ENCODE measurements at regions of chr1 and their contacts with region 1.

Region 1: GRCh38 chr1:42504535-42505128 is 41.5 kb downstream of the CCDC30 start:
- DNase-seq: no peak
- ATAC-seq: no peak
- H3K4me3 ChIP-seq: no peak overlapping the region
- H3K4me3 Mint-ChIP-seq: no peak overlapping the region
- H3K27ac ChIP-seq: no peak overlapping the region
- H3K27ac Mint-ChIP-seq: no peak overlapping the region
- H3K4me1 ChIP-seq: no peaks in the 10 kb centered on the region
- H3K4me1 Mint-ChIP-seq: no peaks in the 10 kb centered on the region
- H3K27me3 ChIP-seq: no peaks in the 10 kb centered on the region
- H3K27me3 Mint-ChIP-seq: no peaks in the 10 kb centered on the region

Region 2: GRCh38 chr1:42240966-42241755 is 263.5 kb before region 1 on chr1:
- CTCF ChIA-PET with region 1: no interaction called
- POLR2A ChIA-PET with region 1: no interaction called
- intact Hi-C with region 1: loop called in 1 of 2 experiments (anchors 10 kb)
- DNase-seq: no peak
- ATAC-seq: no peak
- H3K4me3 ChIP-seq: no peak overlapping the region
- H3K4me3 Mint-ChIP-seq: peak overlapping the region in 2 of 10 donors; percentile 6 to 29
- H3K27ac ChIP-seq: no peak overlapping the region
- H3K27ac Mint-ChIP-seq: peak overlapping the region in 1 of 9 donors; percentile 23
- H3K4me1 ChIP-seq: peaks cover 0 to 12% of the 10 kb centered on the region in 2 donors
- H3K4me1 Mint-ChIP-seq: peaks cover 13 to 71% (median 63%) of the 10 kb centered on the region in 7 donors
- H3K27me3 ChIP-seq: no peaks in the 10 kb centered on the region
- H3K27me3 Mint-ChIP-seq: no peaks in the 10 kb centered on the region